Mammary epithelial cell (primary cell): ENCODE measurements at regions of chr11 and their contacts with region 1.

Region 1: GRCh38 chr11:65194564-65194963 is 12.8 kb downstream of the CAPN1 start:
- DNase-seq: no peak
- H3K4me3 ChIP-seq: no peak overlapping the region
- H3K27ac ChIP-seq: no peak overlapping the region
- H3K4me1 ChIP-seq: no peaks in the 10 kb centered on the region
- H3K27me3 ChIP-seq: no peaks in the 10 kb centered on the region
- CTCF ChIP-seq: no peak

Region 2: DNA sequence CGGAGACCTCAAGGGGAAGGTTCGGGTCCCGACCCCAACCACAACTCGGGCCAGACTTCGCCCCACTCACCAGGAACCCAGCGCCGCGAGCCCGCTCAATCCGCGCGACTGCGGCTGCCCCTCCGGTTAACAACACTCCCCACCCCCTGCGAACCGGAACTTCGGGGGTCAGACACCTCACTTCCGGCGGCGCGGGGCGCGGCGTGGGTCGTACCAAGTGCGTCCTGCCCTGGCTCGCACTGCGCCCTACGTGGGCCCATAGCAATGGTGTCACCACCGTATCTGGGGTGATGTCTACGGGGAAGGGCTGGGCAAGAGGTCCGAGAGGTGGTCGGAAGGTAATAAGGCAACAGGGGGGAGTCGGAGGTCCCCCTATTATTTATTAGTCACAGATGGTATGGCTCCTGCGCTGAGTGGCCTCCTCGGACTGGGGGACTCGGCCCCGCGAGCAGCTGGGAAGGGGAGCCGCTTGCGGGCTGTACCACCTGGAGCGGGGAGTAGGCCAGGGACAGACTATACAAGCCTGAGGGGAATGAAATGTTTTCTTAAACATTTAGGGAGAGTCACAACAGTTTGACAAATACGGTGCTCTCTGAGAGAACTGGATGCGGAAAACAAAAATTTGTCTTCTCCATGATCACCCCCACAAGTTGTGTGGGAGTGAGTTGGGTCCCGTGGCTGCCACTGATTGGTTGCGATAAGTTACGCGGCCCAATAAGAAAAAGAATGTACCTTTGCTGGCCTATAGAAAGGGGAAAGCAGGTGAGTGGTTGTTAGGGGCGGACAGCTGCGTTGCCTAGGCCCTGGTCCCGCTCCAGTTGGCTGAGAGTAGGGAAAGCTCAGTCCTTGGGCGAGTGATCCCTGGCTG is 59.9 kb before region 1 on chr11 and contains the start of gene SYVN1:
- CTCF ChIA-PET with region 1: no interaction called
- dilution Hi-C with region 1: loop called (anchors 5 kb)
- in situ Hi-C with region 1: no loop called
- intact Hi-C with region 1: no loop called
- DNase-seq: peak; percentile 98
- H3K4me3 ChIP-seq: peak within 1 kb of the TSS; percentile 83 to 86 (median 85)
- H3K27ac ChIP-seq: peak within 1 kb of the TSS; percentile 97
- H3K4me1 ChIP-seq: peaks cover 15% of the 10 kb centered on the region
- H3K27me3 ChIP-seq: no peaks in the 10 kb centered on the region
- CTCF ChIP-seq: no peak
- total RNA-seq, gene SYVN1: 21.5 to 45.8 TPM